Right cardiac atrium (tissue), 5 donors: ENCODE measurements at regions of chr10 and their contacts with region 1.

Region 1: DNA sequence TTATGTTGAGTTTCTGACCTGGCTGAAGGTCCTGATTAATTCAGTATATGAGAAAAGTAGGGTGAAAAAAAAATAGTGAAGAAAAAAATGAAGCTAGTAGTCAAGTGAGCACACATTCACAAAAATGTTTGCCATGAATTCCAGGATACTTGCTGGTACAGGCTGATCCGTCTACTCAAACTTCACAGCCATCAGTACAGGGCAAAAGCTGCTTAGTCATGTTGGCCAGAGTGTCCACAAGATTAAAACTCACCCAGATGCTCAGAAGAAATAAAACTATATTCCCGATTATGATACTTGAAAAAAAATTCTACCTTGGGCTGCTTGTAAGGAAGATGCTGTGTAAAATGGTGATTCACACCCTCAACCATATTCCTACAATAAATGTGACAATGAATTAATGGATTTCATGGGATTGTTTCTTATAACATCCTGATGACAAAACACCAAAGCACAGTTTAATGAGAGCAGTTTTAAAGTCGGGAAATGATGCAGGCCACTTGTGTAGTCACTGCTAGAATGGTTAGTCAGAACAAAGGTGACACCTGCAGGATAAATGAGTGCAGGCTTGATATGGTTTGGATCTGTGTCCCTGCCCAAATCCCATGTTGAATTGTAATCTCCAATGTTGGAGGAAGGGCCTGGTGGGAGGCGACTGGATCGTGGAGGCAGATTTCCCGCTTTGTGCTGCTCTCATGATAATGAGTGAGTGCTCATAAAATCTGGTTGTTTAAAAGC is 49.2 kb upstream of the ANKRD1 start:
- DNase-seq: no peak
- ATAC-seq: peak; percentile 48 to 50
- H3K4me3 ChIP-seq: peak overlapping the region; percentile 64
- H3K27ac ChIP-seq: peak overlapping the region; percentile 51
- H3K4me1 ChIP-seq: no peaks in the 10 kb centered on the region
- H3K27me3 ChIP-seq: no peaks in the 10 kb centered on the region

Region 2: DNA sequence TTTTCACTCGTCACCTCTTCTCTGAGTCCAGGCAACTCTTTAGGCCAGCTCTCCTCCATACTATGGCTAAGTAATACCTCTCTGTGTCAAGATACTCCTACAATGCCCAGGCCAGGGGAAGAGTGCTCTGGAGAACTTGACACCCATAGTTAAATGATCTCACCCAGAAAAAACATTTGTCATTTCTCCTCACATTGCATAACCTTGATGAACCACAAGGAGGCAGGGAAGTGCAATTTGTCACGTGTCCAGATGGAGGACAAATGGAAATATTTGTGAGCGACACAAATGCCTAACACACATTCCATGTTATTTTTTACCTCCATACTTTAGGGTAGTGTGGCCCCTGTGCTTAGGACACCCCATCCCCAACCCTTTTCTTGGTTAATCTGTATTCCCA is 190.6 kb before region 1 on chr10:
- intact Hi-C with region 1: no loop called
- DNase-seq: no peak
- ATAC-seq: no peak
- H3K4me3 ChIP-seq: no peak overlapping the region
- H3K27ac ChIP-seq: no peak overlapping the region
- H3K4me1 ChIP-seq: no peaks in the 10 kb centered on the region
- H3K27me3 ChIP-seq: no peaks in the 10 kb centered on the region

Region 3: GRCh38 chr10:90920986-90921666 is 49.0 kb before region 1 on chr10 and contains the start of gene ANKRD1:
- intact Hi-C with region 1: loop called in 2 of 4 experiments (anchors 5 kb)
- DNase-seq: peak in 2 of 3 donors; percentile 67 to 68
- ATAC-seq: peak; percentile 90 to 91
- H3K4me3 ChIP-seq: peak within 1 kb of the TSS; percentile 36
- H3K27ac ChIP-seq: peak within 1 kb of the TSS; percentile 95
- H3K4me1 ChIP-seq: peaks cover 9% of the 10 kb centered on the region
- H3K27me3 ChIP-seq: no peaks in the 10 kb centered on the region
- total RNA-seq, gene ANKRD1: 1,154 to 3,897 (median 2,224) TPM

Region 4: DNA sequence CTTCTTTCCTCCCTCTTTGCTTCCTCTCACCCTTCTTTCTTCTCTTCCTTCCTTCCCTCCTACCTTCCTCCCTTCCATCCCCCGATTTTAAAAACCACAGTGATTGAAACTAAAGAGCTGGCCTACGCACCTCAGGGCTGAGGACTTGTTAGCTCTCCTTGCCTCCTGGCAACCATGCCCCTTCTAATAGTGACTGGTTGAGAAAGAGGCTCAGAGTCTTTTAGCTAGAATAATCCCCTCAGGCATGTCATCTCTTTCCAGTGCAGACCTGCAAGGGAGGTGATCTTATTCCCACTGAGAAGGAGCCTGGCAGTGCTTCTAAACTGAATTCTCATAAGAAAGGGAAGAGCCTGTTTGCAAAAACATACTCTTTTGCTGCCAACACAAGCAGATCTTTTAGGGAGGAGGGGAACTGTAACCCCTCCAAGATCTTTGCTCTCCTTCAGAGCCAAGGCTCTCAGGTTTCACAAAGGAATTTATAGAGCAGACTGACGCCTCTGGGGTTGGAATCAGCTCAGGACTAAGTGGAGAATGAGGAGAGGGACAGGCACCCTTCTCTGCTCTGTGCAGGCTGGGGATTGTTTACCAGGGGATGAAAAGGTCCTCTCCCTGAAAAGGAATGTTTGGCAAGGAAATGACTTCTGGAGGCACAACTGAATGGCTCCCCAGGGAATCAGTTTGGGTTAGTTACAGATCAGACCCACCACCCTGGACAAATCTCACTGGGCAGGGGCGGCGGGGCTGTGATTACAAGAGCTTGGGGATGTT is 39.9 kb before region 1 on chr10:
- intact Hi-C with region 1: loop called in 1 of 4 experiments (anchors 5 kb)
- DNase-seq: peak in 2 of 3 donors; percentile 44 to 74
- ATAC-seq: peak; percentile 87 to 90
- H3K4me3 ChIP-seq: no peak overlapping the region
- H3K27ac ChIP-seq: peak overlapping the region; percentile 98
- H3K4me1 ChIP-seq: peaks cover 11% of the 10 kb centered on the region
- H3K27me3 ChIP-seq: no peaks in the 10 kb centered on the region

Region 5: DNA sequence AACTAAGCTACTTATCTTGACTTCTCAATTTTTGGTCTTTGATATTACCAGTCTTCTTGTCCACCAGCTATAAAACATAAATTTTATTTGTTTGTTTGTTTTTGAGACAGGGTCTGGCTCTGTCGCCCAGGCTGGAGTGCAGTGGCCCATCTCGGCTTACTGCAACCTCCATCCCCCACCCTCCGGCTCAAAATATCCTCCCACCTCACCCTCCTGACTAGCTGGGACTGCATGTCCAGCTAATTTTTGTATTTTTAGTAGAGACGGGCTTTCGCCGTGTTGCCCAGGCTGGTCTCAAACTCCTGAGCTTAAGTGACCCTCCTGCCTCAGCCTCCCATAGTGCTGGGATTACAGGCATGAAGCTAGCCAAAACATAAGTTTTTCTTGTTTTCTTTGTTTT is 1328.4 kb after region 1 on chr10:
- intact Hi-C with region 1: no loop called
- DNase-seq: no peak
- ATAC-seq: peak in 1 of 2 donors; percentile 78
- H3K4me3 ChIP-seq: no peak overlapping the region
- H3K27ac ChIP-seq: peak overlapping the region; percentile 27
- H3K4me1 ChIP-seq: peaks cover 3% of the 10 kb centered on the region
- H3K27me3 ChIP-seq: no peaks in the 10 kb centered on the region